Activated CD8-positive, alpha-beta memory T cell treated with anti-CD3 and anti-CD28 coated beads, Interleukin-2, amount 10 ng/mL, durations not matched to agents 7 days and 5 days (primary cell): ENCODE measurements at regions of chr17 and their contacts with region 1.

Region 1: DNA sequence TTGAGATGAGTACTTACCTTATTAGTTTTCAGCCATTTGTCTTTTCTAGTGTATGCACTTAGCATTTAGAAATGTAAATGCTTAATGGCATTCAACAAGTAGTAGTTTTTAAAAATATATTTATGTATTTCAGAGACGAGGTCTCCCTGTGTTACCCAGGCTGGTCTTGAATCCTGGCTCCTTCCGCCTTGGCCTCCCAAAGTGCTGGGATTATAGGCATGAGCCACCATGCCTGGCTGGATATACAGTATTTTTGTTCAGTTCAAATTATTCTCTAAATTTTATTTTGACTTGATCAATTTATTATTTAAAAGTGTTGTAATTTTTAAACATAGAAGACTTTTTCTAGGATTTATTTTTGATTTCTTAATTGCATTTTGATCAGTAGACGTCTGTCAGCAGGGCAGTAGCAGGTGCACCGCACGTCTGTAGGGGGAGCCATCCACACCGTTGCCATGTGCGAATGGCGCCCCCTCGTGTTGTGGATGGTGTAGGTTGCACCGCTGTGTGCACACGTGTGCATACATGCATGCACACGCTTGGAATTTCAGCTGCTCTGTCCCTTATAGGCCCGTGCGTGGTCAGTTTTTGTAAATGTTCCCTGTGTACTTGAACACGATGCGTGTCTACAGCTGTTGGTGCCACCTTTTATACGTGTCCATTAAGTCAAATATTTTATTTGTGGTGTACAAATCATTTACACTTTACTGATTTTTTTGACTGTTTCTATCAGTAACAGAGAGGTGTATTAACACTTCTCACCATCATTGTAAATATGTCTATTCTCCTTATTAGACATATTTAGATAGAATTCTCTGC is 30.6 kb downstream of the RPTOR start:
- DNase-seq: peak; percentile 94
- ATAC-seq: peak; percentile 100
- H3K4me3 Mint-ChIP-seq: no peak overlapping the region
- H3K27ac Mint-ChIP-seq: peak overlapping the region; percentile 19
- H3K4me1 Mint-ChIP-seq: peaks cover 8% of the 10 kb centered on the region
- H3K27me3 Mint-ChIP-seq: no peaks in the 10 kb centered on the region

Region 2: DNA sequence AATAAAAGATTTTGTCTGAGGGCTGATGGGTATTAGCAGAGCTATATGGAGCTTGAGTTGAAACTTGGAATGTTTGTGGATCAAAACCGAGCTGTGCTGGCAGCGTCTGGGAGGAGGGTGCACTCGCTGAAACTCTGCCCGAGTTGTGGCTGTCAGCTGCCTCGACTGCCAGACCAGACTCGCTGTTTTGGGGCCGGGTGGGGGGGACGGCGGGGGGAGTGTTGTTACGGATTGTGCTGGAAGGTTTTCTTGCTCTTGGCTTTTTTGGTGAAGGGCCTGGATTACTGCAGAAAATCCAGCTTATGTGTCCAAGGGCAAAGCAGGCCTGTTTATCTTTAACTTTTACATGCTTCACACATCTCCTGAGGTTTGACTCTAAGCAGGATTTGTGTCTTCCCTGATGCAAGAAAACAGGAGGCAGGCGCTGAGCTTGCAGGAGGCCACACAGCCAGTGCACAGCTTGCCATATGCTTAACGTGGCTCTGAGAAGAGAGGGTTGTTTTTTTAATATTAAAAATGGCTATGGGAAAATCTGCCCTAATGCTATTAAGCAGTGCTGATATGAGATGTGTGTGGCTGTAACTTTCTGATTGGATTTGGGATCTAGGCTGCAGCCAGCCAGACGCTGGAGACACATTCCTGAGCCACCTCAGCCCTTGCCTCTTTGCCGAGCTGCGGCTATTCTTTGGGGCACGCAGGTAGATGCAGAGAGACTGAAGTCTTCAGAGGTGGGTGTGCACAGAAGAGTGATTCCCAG is 51.1 kb before region 1 on chr17:
- CTCF ChIA-PET with region 1: no interaction called
- DNase-seq: no peak
- ATAC-seq: no peak
- H3K4me3 Mint-ChIP-seq: no peak overlapping the region
- H3K27ac Mint-ChIP-seq: no peak overlapping the region
- H3K4me1 Mint-ChIP-seq: no peaks in the 10 kb centered on the region
- H3K27me3 Mint-ChIP-seq: peaks cover 41% of the 10 kb centered on the region

Region 3: DNA sequence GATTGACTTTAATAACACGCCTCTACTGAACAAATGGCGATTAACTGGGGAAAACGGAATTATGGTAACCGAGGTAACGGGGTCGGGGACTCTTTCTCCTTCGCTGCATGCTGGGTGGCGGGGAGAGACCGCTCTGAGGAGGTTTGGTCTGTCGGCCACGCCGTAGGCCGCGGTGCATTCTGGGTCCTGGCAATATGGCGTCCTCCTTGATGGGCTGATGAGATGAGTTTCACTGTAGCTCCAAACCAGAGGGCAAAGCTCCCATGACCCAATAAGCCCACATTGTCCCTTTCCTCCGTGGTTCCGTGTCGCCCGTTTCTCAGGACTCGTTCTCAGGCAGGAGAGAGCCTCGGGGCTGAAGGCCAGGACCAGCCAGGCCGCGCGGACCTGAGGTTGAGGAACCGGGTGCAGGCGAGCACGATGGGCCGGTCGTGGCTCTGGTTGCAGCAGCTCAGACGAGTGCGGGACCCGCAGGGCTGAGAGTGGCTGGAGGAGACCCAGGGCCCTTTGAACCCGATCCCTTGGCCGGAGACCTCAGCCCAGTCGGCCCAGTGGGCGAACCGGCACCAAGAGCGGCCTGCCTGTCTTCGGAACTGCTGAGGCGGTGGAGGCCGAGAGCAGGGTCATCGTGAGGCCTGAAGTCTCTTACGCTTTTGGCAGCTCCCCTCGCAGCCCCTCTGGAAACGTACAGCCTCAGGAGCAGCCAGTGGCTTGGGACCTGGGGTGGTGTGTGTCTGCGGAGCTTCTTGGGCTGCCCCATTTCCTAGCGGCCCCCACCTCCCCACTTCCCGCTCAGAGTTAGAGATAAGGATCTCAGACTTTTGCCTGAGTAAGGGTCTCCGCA is 30.4 kb before region 1 on chr17 and contains the start of gene RPTOR:
- CTCF ChIA-PET with region 1: interaction called, 10 read pairs
- DNase-seq: peak; percentile 94
- ATAC-seq: peak; percentile 98
- H3K4me3 Mint-ChIP-seq: peak within 1 kb of the TSS; percentile 98
- H3K27ac Mint-ChIP-seq: peak within 1 kb of the TSS; percentile 96
- H3K4me1 Mint-ChIP-seq: peaks cover 32% of the 10 kb centered on the region
- H3K27me3 Mint-ChIP-seq: peaks cover 11% of the 10 kb centered on the region
- total RNA-seq, gene RPTOR: 60.4 to 87.0 TPM

Region 4: GRCh38 chr17:80585890-80586845 is 10.9 kb after region 1 on chr17:
- CTCF ChIA-PET with region 1: interaction called, 23 read pairs
- DNase-seq: no peak
- ATAC-seq: no peak
- H3K4me3 Mint-ChIP-seq: no peak overlapping the region
- H3K27ac Mint-ChIP-seq: peak overlapping the region; percentile 50
- H3K4me1 Mint-ChIP-seq: peaks cover 29% of the 10 kb centered on the region
- H3K27me3 Mint-ChIP-seq: no peaks in the 10 kb centered on the region

Region 5: DNA sequence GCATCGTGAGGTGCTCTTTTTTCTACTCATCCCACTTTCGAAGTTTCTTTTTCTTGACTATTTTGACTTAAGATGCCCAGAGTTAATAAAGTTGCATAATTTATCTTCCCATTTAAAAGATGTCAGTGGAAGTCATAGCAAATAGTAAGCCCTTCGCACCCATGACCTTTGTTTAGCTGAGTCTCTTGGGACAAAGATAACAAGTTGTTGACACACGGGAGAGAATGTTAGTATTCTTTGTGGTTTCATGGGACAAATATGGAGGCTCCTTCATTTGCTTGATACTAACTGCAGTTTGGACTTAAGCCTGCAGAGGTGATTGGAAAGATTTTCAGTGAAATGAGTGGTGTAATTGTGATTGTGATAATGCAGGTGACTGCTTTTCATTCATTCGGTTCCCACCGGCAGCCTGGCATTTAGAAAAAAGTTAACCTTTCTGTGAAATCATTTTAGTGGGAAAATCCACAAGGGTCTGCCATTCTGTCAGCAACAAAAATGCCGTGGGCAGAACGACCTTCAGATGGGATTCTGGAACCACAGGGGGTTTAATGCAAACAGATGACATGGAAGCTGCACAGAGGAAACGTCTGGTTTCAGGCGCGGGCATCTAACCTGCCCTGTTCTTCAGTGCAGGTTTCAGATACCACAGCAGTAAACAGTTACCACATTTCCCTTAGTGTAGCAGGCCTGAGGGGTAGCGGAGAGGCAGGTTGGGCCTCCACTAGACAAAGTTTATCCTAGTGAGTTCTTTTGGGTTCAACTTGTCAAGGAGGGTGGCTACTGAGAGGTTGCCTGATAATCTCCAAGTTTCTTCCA is 92.4 kb after region 1 on chr17:
- CTCF ChIA-PET with region 1: no interaction called
- DNase-seq: peak; percentile 60
- ATAC-seq: peak; percentile 62
- H3K4me3 Mint-ChIP-seq: no peak overlapping the region
- H3K27ac Mint-ChIP-seq: peak overlapping the region; percentile 77
- H3K4me1 Mint-ChIP-seq: peaks cover 67% of the 10 kb centered on the region
- H3K27me3 Mint-ChIP-seq: no peaks in the 10 kb centered on the region